AG04449 (cell line): ENCODE measurements at regions of chr2 and their contacts with region 1.

Region 1: GRCh38 chr2:175030380-175031271 is 25.4 kb upstream of the CHN1 start:
- DNase-seq: peak; percentile 3
- H3K4me3 ChIP-seq: no peak overlapping the region
- CTCF ChIP-seq: peak; percentile 50

Region 2: GRCh38 chr2:174778085-174778981 is 252.3 kb before region 1 on chr2:
- CTCF ChIA-PET with region 1: no interaction called
- POLR2A ChIA-PET with region 1: no interaction called
- DNase-seq: peak; percentile 90
- H3K4me3 ChIP-seq: no peak overlapping the region
- CTCF ChIP-seq: no peak

Region 3: DNA sequence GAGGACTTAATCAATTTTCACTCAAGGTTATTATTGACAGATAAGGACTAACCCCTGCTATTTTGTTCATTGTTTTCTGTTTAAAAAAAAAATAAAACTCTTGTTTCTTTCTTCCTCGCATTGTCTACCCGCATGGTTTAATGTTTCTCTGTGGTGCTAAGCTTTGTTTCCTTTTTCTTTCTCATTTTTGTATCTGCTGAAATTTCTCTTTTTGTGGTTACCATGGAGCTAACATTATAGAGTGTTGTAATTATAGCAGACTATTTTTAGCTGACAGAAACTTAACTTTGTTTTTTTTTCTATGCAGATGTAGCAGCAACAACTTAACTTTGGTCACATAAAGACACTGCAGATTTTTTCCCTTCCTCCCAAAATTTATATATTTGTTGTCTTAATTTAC is 17.6 kb after region 1 on chr2:
- CTCF ChIA-PET with region 1: interaction called, 10 read pairs
- POLR2A ChIA-PET with region 1: no interaction called
- DNase-seq: no peak
- H3K4me3 ChIP-seq: no peak overlapping the region
- CTCF ChIP-seq: no peak

Region 4: GRCh38 chr2:175326801-175327200 is 296.2 kb after region 1 on chr2:
- CTCF ChIA-PET with region 1: interaction called, 13 read pairs
- POLR2A ChIA-PET with region 1: no interaction called
- DNase-seq: no peak
- H3K4me3 ChIP-seq: no peak overlapping the region
- CTCF ChIP-seq: no peak

Region 5: GRCh38 chr2:175342085-175342484 is 311.5 kb after region 1 on chr2:
- CTCF ChIA-PET with region 1: no interaction called
- POLR2A ChIA-PET with region 1: no interaction called
- DNase-seq: no peak
- H3K4me3 ChIP-seq: no peak overlapping the region
- CTCF ChIP-seq: no peak